ENCODE measurements at regions of chr10 and their contacts with region 1.

Region 1: DNA sequence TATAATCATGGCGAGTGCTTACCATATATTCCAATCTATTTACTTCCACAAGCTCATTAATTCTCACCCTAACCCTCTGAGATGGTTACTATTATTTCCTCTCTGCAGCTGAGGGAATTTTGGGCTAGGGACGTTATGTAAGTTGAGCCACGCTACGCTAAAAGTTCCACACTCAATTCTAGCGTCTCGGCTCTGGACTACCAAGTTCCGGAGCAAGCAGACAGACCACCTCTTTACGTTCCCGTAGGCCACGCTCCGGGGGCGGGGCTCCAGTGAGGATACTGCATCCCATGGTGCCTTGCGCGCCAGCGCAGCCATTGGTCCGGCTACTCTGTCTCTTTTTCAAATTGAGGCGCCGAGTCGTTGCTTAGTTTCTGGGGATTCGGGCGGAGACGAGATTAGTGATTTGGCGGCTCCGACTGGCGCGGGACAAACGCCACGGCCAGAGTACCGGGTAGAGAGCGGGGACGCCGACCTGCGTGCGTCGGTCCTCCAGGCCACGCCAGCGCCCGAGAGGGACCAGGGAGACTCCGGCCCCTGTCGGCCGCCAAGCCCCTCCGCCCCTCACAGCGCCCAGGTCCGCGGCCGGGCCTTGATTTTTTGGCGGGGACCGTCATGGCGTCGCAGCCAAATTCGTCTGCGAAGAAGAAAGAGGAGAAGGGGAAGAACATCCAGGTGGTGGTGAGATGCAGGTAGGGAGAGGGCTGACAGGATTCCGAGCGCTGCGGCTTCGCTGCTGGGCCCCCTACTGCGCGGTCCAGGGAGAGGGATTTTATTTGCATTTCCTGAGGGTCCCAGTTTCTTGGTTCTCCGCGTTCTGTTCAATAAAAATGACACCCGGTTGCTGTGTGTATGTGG is at the start of gene KIF11:
- DNase-seq: peak; percentile 96
- H3K4me3 Mint-ChIP-seq: peak within 1 kb of the TSS; percentile 91
- H3K27ac Mint-ChIP-seq: peak within 1 kb of the TSS; percentile 100
- H3K4me1 Mint-ChIP-seq: peaks cover 50% of the 10 kb centered on the region
- H3K27me3 Mint-ChIP-seq: no peaks in the 10 kb centered on the region
- total RNA-seq, gene KIF11: 41.4 and 44.9 TPM in 2 replicates

Region 2: GRCh38 chr10:92290837-92291615 is 302.0 kb before region 1 on chr10 and contains the starts of genes CPEB3 and MARCHF5:
- intact Hi-C with region 1: loop called (anchors 1 kb)
- DNase-seq: peak; percentile 89
- H3K4me3 Mint-ChIP-seq: peak within 1 kb of the TSS; percentile 94
- H3K27ac Mint-ChIP-seq: peak within 1 kb of the TSS; percentile 77
- H3K4me1 Mint-ChIP-seq: peaks cover 21% of the 10 kb centered on the region
- H3K27me3 Mint-ChIP-seq: no peaks in the 10 kb centered on the region
- total RNA-seq, gene CPEB3: 1.9 TPM in 2 replicates
- total RNA-seq, gene MARCHF5: 19.4 and 20.3 TPM in 2 replicates

Region 3: DNA sequence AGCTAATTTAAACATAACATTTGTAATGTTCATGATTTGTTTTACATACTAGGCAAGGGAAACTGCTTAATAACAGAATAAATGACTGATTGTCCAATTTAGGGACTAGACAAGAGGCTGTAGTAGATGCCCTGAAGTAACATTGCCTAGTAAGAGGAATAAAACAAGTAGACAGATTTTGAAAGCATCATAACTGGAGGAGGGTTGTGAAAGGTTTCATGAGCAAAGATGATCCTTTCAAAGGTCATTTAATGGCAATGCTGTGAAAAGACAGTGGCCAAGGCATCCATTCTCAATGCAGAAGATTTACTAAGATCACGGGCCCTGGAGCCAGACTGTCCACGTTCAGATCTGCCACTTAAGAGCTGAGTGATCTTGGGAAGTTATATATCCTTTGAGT is 51.9 kb after region 1 on chr10:
- intact Hi-C with region 1: loop called (anchors 2 kb)
- DNase-seq: no peak
- H3K4me3 Mint-ChIP-seq: no peak overlapping the region
- H3K27ac Mint-ChIP-seq: no peak overlapping the region
- H3K4me1 Mint-ChIP-seq: peaks cover 9% of the 10 kb centered on the region
- H3K27me3 Mint-ChIP-seq: no peaks in the 10 kb centered on the region

Region 4: DNA sequence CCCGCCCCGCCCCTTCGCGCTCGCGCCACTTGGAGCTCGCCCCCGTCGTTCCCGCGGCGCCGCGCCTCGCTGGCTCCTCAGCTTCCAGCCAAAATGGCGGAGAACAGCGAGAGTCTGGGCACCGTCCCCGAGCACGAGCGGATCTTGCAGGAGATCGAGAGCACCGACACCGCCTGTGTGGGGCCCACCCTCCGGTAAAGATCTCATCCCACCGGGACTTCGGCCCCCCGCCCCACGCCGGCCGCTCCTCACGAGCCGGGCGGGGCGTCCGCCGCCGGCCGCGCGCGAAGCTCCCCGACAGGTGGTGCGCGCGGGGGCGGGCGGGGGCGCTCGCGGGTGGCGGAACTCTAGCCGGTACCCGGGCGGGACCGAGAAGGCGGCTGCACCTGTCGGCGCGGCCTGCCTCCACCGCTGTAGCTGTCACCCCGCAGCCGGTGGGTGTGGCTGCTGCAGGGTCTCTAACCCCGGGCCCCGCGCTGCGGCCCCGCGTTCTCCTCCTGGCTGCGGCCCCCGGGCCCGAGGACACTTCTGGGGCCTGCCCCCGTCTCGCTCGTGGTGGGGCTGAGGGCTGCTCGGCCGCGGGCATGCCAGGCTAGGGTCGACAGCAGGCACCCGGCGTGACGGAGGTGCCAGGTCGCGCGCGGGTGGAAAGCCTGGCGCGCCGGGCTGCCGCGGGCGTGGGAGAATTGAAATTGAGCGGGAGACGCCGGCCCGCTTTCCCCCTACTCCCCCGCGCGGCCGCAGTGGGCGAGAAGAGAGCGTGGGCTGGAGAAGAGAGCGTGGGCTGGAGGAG is 255.6 kb after region 1 on chr10 and contains the start of gene EXOC6:
- intact Hi-C with region 1: loop called (anchors 5 kb)
- DNase-seq: peak; percentile 81
- H3K4me3 Mint-ChIP-seq: peak within 1 kb of the TSS; percentile 80
- H3K27ac Mint-ChIP-seq: peak within 1 kb of the TSS; percentile 80
- H3K4me1 Mint-ChIP-seq: peaks cover 39% of the 10 kb centered on the region
- H3K27me3 Mint-ChIP-seq: no peaks in the 10 kb centered on the region
- total RNA-seq, gene EXOC6: 12.4 and 12.5 TPM in 2 replicates